ENCODE measurements at regions of chr12 and their contacts with region 1.

Region 1: GRCh38 chr12:97097734-97098133 is 190.7 kb downstream of the NEDD1 start:
- DNase-seq: no peak
- ATAC-seq: no peak
- H3K4me3 ChIP-seq: no peak overlapping the region
- H3K27ac ChIP-seq: no peak overlapping the region
- H3K4me1 ChIP-seq: no peaks in the 10 kb centered on the region
- H3K27me3 ChIP-seq: no peaks in the 10 kb centered on the region

Region 2: DNA sequence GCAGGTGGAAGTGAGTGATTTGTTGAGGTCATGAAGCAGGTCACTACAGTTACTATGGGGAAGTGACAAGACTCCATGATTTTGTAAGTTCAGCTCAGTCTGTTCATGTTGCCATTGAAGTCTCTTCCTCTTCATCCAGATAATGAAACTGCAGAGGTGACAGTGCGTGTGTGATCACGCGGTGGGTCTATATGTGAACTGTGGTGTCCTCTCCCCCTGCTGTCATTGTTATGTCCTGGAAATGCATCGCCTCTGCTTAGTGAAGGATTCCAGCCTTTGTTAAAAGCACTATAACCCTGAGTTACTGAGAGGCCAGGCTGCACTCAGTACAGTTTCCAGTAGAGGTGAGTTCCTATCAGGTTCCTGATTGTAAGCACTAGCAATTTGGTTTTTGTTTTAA is 148.6 kb after region 1 on chr12:
- intact Hi-C with region 1: no loop called
- DNase-seq: no peak
- ATAC-seq: no peak
- H3K4me3 ChIP-seq: no peak overlapping the region
- H3K27ac ChIP-seq: no peak overlapping the region
- H3K4me1 ChIP-seq: no peaks in the 10 kb centered on the region
- H3K27me3 ChIP-seq: no peaks in the 10 kb centered on the region

Region 3: GRCh38 chr12:97784904-97785303 is 687.2 kb after region 1 on chr12:
- intact Hi-C with region 1: loop called in 1 of 4 experiments (anchors 10 kb)
- DNase-seq: no peak
- ATAC-seq: no peak
- H3K4me3 ChIP-seq: no peak overlapping the region
- H3K27ac ChIP-seq: no peak overlapping the region
- H3K4me1 ChIP-seq: no peaks in the 10 kb centered on the region
- H3K27me3 ChIP-seq: no peaks in the 10 kb centered on the region